ENCODE measurements at regions of chr10 and their contacts with region 1.

Region 1: GRCh38 chr10:3783316-3783681 is 1.7 kb downstream of the KLF6 start:
- DNase-seq: peak; percentile 64 to 86 (median 78)
- ATAC-seq: peak; percentile 2
- H3K4me3 ChIP-seq: peak overlapping the region; percentile 66 to 97
- H3K27ac ChIP-seq: peak overlapping the region; percentile 100
- H3K4me1 ChIP-seq: peaks cover 39 to 47% of the 10 kb centered on the region in 2 donors
- H3K27me3 ChIP-seq: no peaks in the 10 kb centered on the region
- CTCF ChIP-seq: no peak

Region 2: GRCh38 chr10:3852147-3852904 is 69.0 kb after region 1 on chr10:
- intact Hi-C with region 1: loop called in 1 of 2 experiments (anchors 5 kb)
- DNase-seq: peak in 3 of 4 donors; percentile 85 to 90 (median 86)
- ATAC-seq: peak; percentile 77
- H3K4me3 ChIP-seq: no peak overlapping the region
- H3K27ac ChIP-seq: peak overlapping the region; percentile 87 to 95
- H3K4me1 ChIP-seq: peaks cover 26 to 53% of the 10 kb centered on the region in 2 donors
- H3K27me3 ChIP-seq: no peaks in the 10 kb centered on the region
- CTCF ChIP-seq: no peak